ENCODE measurements at regions of chr2 and their contacts with region 1.

Region 1: GRCh38 chr2:28594289-28595108 is 98.6 kb downstream of the PLB1 start:
- DNase-seq: peak; percentile 90
- H3K4me3 Mint-ChIP-seq: peak overlapping the region; percentile 48
- H3K27ac Mint-ChIP-seq: peak overlapping the region; percentile 81
- H3K4me1 Mint-ChIP-seq: peaks cover 25% of the 10 kb centered on the region
- H3K27me3 Mint-ChIP-seq: no peaks in the 10 kb centered on the region
- CTCF ChIP-seq: peak; percentile 66

Region 2: GRCh38 chr2:28252311-28252710 is 342.2 kb before region 1 on chr2:
- CTCF ChIA-PET with region 1: no interaction called
- POLR2A ChIA-PET with region 1: no interaction called
- intact Hi-C with region 1: no loop called
- DNase-seq: no peak
- H3K4me3 Mint-ChIP-seq: no peak overlapping the region
- H3K27ac Mint-ChIP-seq: peak overlapping the region; percentile 39
- H3K4me1 Mint-ChIP-seq: peaks cover 7% of the 10 kb centered on the region
- H3K27me3 Mint-ChIP-seq: no peaks in the 10 kb centered on the region
- CTCF ChIP-seq: no peak

Region 3: GRCh38 chr2:28521663-28522062 is 72.8 kb before region 1 on chr2:
- CTCF ChIA-PET with region 1: no interaction called
- POLR2A ChIA-PET with region 1: no interaction called
- intact Hi-C with region 1: no loop called
- DNase-seq: no peak
- H3K4me3 Mint-ChIP-seq: no peak overlapping the region
- H3K27ac Mint-ChIP-seq: no peak overlapping the region
- H3K4me1 Mint-ChIP-seq: no peaks in the 10 kb centered on the region
- H3K27me3 Mint-ChIP-seq: peaks cover 66% of the 10 kb centered on the region
- CTCF ChIP-seq: no peak

Region 4: GRCh38 chr2:28577791-28578680 is 16.5 kb before region 1 on chr2:
- CTCF ChIA-PET with region 1: interaction called, 35 read pairs
- POLR2A ChIA-PET with region 1: interaction called, 59 read pairs
- intact Hi-C with region 1: no loop called
- DNase-seq: no peak
- H3K4me3 Mint-ChIP-seq: no peak overlapping the region
- H3K27ac Mint-ChIP-seq: no peak overlapping the region
- H3K4me1 Mint-ChIP-seq: peaks cover 12% of the 10 kb centered on the region
- H3K27me3 Mint-ChIP-seq: no peaks in the 10 kb centered on the region
- CTCF ChIP-seq: no peak

Region 5: DNA sequence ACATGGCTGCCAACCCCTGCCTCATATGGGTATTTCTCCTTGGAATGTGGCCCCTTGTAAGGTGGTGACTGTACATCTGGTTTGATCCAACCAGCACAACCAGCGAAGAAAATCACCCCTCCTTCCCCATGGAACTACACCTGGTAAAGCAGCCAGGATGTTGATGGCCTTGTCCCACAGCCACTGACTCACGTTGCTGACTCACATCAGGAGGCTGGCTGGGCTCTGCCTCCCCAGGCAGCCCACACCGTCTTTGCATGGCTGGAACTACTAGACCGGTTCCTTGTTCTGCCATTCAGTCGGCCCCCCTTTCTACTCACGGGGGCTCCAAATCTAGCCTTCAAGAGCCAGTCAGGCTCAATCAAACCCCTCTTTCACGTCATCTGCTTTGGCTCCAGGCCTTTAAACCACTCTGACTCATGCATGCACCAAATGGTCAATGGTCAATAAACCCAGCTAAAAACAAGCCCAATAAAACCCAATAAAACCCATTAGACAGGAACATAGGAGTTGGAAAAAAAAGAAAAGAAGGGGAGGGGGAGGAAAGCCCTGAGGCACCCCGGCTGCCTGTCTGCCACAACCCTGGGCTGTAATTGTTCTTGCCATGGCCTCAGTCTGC is 16.2 kb after region 1 on chr2:
- CTCF ChIA-PET with region 1: interaction called, 36 read pairs
- POLR2A ChIA-PET with region 1: interaction called, 16 read pairs
- intact Hi-C with region 1: no loop called
- DNase-seq: peak; percentile 92
- H3K4me3 Mint-ChIP-seq: peak overlapping the region; percentile 24
- H3K27ac Mint-ChIP-seq: peak overlapping the region; percentile 95
- H3K4me1 Mint-ChIP-seq: peaks cover 34% of the 10 kb centered on the region
- H3K27me3 Mint-ChIP-seq: no peaks in the 10 kb centered on the region
- CTCF ChIP-seq: no peak

Region 6: GRCh38 chr2:28661589-28662001 is 67.1 kb after region 1 on chr2:
- CTCF ChIA-PET with region 1: interaction called, 5 read pairs
- POLR2A ChIA-PET with region 1: interaction called, 20 read pairs
- intact Hi-C with region 1: no loop called
- DNase-seq: peak; percentile 88
- H3K4me3 Mint-ChIP-seq: no peak overlapping the region
- H3K27ac Mint-ChIP-seq: peak overlapping the region; percentile 78
- H3K4me1 Mint-ChIP-seq: peaks cover 44% of the 10 kb centered on the region
- H3K27me3 Mint-ChIP-seq: no peaks in the 10 kb centered on the region
- CTCF ChIP-seq: no peak

Region 7: GRCh38 chr2:28751252-28751955 is 156.9 kb after region 1 on chr2 and contains the start of gene PPP1CB:
- CTCF ChIA-PET with region 1: interaction called, 99 read pairs
- POLR2A ChIA-PET with region 1: interaction called, 148 read pairs
- intact Hi-C with region 1: loop called (anchors 1 kb)
- DNase-seq: peak; percentile 92
- H3K4me3 Mint-ChIP-seq: peak within 1 kb of the TSS; percentile 95
- H3K27ac Mint-ChIP-seq: peak within 1 kb of the TSS; percentile 98
- H3K4me1 Mint-ChIP-seq: peaks cover 20% of the 10 kb centered on the region
- H3K27me3 Mint-ChIP-seq: no peaks in the 10 kb centered on the region
- CTCF ChIP-seq: peak; percentile 21
- total RNA-seq, gene PPP1CB: 244 and 269 TPM in 2 replicates

Region 8: DNA sequence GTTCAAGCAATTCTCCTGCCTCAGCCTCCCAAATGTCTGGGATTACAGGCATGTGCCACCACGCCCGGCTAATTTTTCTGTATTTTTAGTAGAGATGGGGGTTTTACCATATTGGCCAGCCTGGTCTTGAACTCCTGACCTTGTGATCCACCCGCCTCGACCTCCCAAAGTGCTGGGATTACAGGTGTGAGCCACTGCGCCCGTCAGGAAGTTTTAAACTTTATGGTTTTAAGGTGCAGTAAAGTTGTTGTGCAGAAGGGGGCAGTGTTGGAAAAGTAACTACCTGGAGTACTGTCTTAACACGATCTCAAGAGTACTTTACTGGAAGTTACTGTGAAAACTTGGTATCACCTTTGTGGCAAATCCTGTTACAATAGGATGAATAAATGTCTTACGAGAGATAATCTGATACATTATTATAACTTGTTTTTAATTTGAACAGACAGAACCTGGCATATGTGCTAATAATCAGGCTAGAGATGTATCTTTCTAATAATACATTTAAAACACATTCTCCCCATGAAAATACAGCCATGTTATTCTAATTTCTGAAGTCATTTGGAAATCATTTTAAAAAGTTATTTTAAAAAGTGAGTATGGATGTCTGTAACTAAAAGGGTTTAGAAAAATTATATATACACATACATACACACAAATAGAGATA is 226.9 kb after region 1 on chr2:
- CTCF ChIA-PET with region 1: interaction called, 10 read pairs
- POLR2A ChIA-PET with region 1: interaction called, 3 read pairs
- intact Hi-C with region 1: no loop called
- DNase-seq: peak; percentile 70
- H3K4me3 Mint-ChIP-seq: no peak overlapping the region
- H3K27ac Mint-ChIP-seq: no peak overlapping the region
- H3K4me1 Mint-ChIP-seq: no peaks in the 10 kb centered on the region
- H3K27me3 Mint-ChIP-seq: no peaks in the 10 kb centered on the region
- CTCF ChIP-seq: peak; percentile 59

Measured in MCF 10A (cell line).